Posterior vena cava (tissue), 2 donors: ENCODE measurements at regions of chr22 and their contacts with region 1.

Region 1: GRCh38 chr22:38748487-38749136 is 7.2 kb downstream of the SUN2 start:
- DNase-seq: no peak

Region 2: DNA sequence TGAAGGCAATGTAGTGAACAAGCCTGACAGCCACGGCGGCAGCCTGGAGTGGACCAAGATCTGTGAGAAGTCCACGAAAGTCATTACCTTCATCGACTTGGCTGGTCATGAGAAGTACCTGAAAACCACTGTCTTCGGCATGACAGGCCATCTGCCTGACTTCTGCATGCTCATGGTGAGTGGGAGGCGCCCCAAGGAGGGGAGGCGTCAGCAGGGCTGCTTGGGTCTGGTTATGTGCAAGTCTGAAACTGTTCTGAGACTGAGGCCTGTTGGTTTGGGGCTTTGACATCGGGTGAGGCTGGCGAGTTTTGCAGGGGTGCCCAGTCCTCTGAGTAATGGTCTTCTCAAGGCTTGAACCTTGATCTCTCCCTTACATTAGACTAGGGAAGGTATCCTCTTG is 31.8 kb before region 1 on chr22:
- intact Hi-C with region 1: loop called in 1 of 2 experiments (anchors 1 kb)
- DNase-seq: peak; percentile 77

Region 3: DNA sequence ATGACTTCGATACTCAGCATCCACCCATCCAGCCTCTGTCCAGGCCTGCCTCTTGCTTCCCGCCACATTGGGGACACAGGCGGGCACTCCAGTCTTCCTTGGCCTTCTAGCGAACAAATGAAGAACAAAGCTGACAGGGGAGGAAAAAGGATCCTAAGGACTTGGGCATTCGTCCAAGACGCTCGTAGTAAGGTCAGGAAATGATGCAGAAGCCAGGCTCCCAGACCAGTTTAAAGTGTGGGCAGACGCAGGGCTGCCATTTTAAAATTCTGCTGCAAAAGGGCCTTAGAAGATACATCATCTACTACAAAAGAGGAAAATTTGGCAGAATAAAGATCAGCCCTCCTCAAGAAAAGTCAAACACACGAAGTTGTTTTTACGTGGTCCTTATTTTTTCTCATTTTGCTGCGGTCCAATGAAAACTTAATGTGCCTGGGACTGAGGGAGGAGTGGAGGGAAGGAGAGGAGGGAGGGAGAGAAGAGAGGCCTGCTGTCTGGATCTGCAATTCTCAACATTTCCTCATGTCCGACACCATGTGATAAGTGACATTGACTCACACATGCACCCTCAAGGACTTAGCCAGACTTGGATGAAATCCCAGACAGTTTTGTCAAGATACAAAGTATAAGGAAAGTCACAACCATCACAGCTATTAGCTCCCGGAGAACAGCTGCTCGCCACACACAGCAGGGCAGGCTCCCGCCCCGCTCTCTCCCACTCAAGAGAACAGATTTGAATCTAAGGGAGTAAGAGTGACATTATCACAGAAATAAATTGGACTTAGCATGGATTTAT is 39.6 kb after region 1 on chr22:
- intact Hi-C with region 1: no loop called
- DNase-seq: no peak